GM12878 (cell line): ENCODE measurements at regions of chr7 and their contacts with region 1.

Region 1: GRCh38 chr7:74068393-74069085 is 15.1 kb upstream of the LIMK1 start:
- DNase-seq: no peak
- ATAC-seq: no peak
- H3K4me3 ChIP-seq: no peak overlapping the region
- H3K27ac ChIP-seq: no peak overlapping the region
- H3K4me1 ChIP-seq: no peaks in the 10 kb centered on the region
- H3K27me3 ChIP-seq: no peaks in the 10 kb centered on the region
- CTCF ChIP-seq: no peak
- EP300 ChIP-seq: no peak
- POLR2A ChIP-seq: no peak
- RAD21 ChIP-seq: no peak

Region 2: DNA sequence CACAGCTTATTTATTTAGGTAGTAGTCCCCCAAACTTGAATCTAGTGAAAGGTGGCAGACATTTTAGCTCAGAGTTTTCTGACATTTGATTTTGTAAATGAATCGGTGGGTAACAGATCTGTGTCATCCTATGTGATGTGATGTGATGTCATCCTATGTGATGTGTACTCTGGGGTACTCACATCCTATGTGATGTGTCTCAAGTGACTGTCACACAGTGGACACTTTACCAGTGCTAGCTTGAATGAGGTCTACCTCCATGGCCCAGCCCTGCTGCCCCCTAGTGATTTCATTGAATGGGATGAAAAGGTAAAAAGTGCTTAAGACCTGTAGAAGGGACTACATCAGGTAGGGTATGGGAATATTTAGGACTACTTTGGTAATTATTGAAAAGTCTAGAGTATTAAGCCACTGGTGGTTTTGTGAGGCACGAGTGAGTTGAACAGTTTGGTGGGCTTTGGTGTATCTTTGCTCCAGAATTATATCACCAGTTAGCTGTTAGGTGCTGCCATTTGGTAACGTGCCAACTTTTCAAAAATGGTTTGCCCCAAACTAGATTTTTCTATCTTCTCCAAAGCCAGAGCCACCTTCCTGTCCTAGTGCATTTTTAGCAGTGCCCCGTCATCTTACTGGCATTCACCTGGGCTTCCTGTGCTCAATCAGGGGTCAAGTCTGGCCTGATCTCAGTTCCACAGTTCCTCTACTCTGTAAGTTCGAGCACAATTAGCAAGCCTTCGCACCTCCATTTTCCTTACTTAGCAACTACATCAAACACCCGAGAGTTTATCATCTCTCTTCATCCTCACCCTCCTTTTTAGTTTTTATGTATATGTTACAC is 115.3 kb after region 1 on chr7:
- CTCF ChIA-PET with region 1: interaction called, 51 read pairs
- POLR2A ChIA-PET with region 1: no interaction called
- RAD21 ChIA-PET with region 1: interaction called, 20 read pairs
- SMC1A ChIA-PET with region 1: interaction called, 5 read pairs
- in situ Hi-C with region 1: no loop called
- intact Hi-C with region 1: loop called (anchors 5 kb)
- DNase-seq: no peak
- ATAC-seq: peak; percentile 76
- H3K4me3 ChIP-seq: no peak overlapping the region
- H3K27ac ChIP-seq: no peak overlapping the region
- H3K4me1 ChIP-seq: no peaks in the 10 kb centered on the region
- H3K27me3 ChIP-seq: no peaks in the 10 kb centered on the region
- CTCF ChIP-seq: peak; percentile 35 to 55 (median 44)
- EP300 ChIP-seq: no peak
- POLR2A ChIP-seq: no peak
- RAD21 ChIP-seq: peak; percentile 44